Activated T-helper 1 cell treated with anti-CD3 and anti-CD28 coated beads, Interleukin-12 subunit alpha, Interleukin-12 subunit beta, Interleukin-2, Interleukin-4 antibody, amounts not matched to agents 30 ng/mL and 10 ng/mL and 1 ng/mL, durations not matched to agents 14 hours and 24 hours and 36 hours (primary cell): ENCODE measurements at regions of chr14 and their contacts with region 1.

Region 1: DNA sequence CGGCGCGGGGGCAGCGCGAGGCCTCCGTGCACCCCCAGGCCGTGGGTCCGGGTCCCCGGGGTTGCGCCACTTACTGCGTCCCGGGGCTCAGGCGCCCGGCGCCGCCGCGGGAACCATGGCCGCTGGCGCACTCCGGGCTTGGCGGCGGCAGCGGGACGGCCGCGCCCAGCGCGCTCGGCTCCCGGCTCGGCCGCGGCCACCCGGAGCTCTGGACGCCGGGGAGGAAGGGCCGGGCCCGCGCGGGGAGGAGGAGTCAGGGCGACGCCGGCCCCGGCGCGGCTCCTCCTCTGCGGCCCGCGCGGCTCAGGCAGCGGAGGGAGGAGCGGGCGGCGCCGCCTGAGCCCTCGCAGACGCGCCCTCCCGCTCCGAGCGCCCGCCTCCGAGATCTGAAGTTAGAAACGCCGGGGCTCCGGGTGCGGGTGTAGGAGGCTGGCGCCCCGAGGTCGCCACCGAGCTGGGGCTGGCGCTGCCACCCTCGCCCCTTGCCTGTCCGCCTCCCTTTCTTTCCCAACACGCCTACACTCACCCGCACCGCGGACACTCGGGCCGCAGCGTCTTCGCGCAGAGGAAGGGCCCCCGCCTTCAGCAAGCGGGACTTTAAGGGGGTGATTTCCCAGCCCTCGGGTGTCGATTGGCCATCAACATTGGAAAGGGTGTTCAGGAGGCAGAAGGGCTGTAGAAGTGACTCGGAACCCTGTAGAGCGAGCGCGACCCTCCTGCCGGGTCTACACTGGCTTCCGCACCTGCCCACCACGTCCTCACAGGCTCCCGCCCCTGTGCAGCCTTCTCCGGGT is at the start of gene NIN:
- DNase-seq: peak; percentile 73
- H3K4me3 Mint-ChIP-seq: peak within 1 kb of the TSS; percentile 93
- H3K27ac Mint-ChIP-seq: peak within 1 kb of the TSS; percentile 95
- H3K4me1 Mint-ChIP-seq: peaks cover 67% of the 10 kb centered on the region
- H3K27me3 Mint-ChIP-seq: peaks cover 16% of the 10 kb centered on the region
- total RNA-seq, gene NIN: 39.9 and 43.3 TPM in 2 replicates

Region 2: DNA sequence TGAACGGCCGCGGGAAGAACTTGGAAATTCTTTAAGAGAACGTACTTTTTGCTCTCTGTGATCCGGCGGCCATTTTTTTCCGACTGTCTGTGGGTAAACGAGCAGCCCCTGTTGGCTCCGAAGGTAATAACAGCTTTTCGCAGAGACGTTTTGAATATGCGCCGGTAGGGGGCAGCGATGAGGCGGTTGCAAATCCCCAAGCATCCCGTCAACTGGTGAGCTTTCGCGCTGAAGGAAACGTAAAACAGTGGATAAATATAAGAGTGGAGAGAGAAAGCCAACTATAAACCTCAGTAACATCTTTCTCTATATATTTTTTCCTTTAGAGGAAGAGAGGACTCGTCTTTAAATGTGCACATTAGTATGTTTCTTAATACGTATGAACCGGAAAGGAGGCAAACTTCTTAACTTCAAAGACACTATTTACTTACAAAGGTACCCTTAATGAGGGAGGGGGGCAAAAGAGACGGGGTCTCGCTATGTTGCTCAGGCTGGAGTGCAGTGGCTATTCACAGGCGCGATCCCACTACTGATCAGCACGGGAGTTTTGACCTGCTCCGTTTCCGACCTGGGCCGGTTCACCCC is 968.9 kb before region 1 on chr14:
- intact Hi-C with region 1: loop called (anchors 1 kb)
- DNase-seq: peak; percentile 81
- H3K4me3 Mint-ChIP-seq: no peak overlapping the region
- H3K27ac Mint-ChIP-seq: no peak overlapping the region
- H3K4me1 Mint-ChIP-seq: peaks cover 10% of the 10 kb centered on the region
- H3K27me3 Mint-ChIP-seq: peaks cover 6% of the 10 kb centered on the region

Region 3: GRCh38 chr14:50736932-50737419 is 94.2 kb before region 1 on chr14:
- intact Hi-C with region 1: loop called (anchors 2 kb)
- DNase-seq: peak; percentile 18
- H3K4me3 Mint-ChIP-seq: no peak overlapping the region
- H3K27ac Mint-ChIP-seq: peak overlapping the region; percentile 87
- H3K4me1 Mint-ChIP-seq: peaks cover 45% of the 10 kb centered on the region
- H3K27me3 Mint-ChIP-seq: no peaks in the 10 kb centered on the region

Region 4: DNA sequence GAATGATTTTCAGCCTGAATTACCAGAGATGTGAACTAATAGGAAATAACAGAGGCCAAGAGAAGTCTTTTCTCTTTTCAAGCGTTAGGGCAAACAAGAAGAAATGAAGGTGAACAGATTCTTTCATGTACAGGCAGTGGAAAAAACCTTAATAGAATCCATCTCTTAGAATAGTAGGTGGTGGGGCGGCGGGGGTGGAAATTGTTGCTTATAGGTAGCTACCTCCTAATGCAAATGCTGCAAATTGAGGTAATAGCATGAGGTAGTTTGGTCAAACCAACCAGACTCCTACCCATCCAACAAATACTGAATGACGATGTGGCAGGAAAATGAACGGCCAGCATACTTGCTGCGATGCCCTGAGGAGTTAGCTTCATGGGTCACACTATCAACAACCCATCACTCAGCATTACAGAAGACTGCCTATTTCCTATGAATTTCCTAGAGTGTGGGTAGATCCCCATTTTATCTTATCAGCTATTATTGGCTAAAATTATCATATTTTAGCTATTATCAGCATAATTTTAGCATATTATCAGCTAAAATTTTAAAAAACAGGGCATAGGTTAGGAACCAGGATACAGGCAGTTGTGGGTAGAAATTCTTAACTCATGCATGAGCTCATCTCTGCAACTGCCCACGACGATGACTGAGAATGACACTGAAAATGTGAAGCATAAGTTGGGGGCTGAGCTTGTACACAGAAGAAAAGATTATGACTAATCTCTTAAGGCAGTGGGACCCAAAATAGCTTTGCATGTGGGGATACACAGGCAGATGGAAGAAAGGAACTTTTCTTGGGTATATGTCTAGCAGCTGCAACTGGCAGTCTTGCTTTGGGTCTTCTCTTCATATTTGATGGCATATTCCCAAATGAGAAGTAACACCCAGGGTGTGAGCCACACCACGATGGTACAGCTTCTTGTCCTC is 68.9 kb before region 1 on chr14:
- intact Hi-C with region 1: loop called (anchors 2 kb)
- DNase-seq: no peak
- H3K4me3 Mint-ChIP-seq: peak overlapping the region; percentile 7
- H3K27ac Mint-ChIP-seq: peak overlapping the region; percentile 74
- H3K4me1 Mint-ChIP-seq: peaks cover 19% of the 10 kb centered on the region
- H3K27me3 Mint-ChIP-seq: no peaks in the 10 kb centered on the region

Region 5: DNA sequence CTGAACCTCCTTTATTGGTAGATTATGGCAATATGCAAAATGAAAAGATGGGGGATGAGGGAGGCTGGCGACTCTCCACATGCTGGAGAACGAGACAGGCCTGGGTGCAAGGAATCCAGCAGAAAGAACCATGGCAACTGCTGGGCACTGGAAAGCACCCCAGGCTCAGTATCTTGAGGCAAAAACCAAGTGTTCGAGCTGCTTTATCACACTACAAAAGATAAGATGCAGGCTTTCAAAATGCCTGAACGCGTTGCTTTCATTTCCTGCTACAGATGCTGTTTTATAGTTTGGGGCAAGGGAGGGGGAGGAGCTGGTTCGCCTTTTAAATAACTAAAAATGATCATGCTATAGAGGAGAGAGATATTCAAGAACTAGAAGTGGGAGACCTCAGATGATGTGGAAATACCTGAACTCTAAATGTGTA is 39.1 kb before region 1 on chr14:
- intact Hi-C with region 1: loop called (anchors 2 kb)
- DNase-seq: no peak
- H3K4me3 Mint-ChIP-seq: peak overlapping the region; percentile 40
- H3K27ac Mint-ChIP-seq: peak overlapping the region; percentile 63
- H3K4me1 Mint-ChIP-seq: peaks cover 68% of the 10 kb centered on the region
- H3K27me3 Mint-ChIP-seq: no peaks in the 10 kb centered on the region

Region 6: DNA sequence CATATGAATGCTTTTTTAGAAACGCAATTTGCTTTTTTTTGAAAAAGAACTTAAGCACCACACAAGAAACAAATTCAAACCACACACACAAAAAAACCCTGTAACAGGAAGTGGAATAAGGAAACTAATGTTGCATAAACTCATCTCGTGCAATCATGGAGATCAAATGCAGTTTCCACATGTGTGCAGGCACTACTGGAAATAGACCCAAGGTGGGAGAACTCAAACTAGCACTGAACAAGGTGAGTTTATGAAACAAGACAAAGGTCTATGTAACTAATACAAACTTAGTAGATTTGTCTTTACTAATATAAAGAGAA is 17.6 kb before region 1 on chr14:
- intact Hi-C with region 1: loop called (anchors 2 kb)
- DNase-seq: no peak
- H3K4me3 Mint-ChIP-seq: peak overlapping the region; percentile 35
- H3K27ac Mint-ChIP-seq: peak overlapping the region; percentile 72
- H3K4me1 Mint-ChIP-seq: peaks cover 33% of the 10 kb centered on the region
- H3K27me3 Mint-ChIP-seq: no peaks in the 10 kb centered on the region

Region 7: DNA sequence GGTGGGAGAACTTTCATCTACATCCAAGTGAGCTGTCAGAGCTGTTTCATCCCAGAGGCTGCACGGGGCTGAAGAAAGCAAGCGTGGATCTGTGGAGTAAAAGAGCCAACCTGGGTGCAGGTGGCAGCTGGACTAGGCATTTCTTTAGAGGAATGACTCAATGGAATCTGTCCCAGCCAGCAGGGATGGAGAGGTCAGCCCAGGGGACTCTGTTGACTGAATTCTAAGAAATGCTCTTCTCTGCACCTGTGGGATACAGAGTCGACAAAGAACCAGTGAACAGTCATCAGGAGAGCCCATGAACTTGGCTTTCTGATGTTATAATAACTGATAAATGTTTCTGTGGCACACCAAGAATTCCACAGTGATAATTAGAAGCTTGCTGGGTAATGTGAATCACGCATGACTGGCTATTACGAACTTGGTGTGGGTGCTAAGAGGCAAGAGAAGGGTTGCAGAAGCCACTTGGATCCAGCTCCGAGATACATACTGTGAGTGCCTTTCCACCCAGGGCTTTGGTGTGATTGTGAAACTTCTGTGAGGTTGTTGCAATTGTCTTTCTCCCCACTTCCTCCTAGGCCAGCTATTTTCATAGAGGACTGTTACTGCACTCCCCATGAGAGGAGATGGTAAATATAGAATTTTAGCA is 97.0 kb after region 1 on chr14:
- intact Hi-C with region 1: no loop called
- DNase-seq: no peak
- H3K4me3 Mint-ChIP-seq: no peak overlapping the region
- H3K27ac Mint-ChIP-seq: no peak overlapping the region
- H3K4me1 Mint-ChIP-seq: no peaks in the 10 kb centered on the region
- H3K27me3 Mint-ChIP-seq: peaks cover 3% of the 10 kb centered on the region

Region 8: GRCh38 chr14:51239813-51240803 is 409.0 kb after region 1 on chr14 and contains the start of gene TMX1:
- intact Hi-C with region 1: loop called (anchors 5 kb)
- DNase-seq: peak; percentile 87
- H3K4me3 Mint-ChIP-seq: no peak within 1 kb of the TSS
- H3K27ac Mint-ChIP-seq: no peak within 1 kb of the TSS
- H3K4me1 Mint-ChIP-seq: peaks cover 12% of the 10 kb centered on the region
- H3K27me3 Mint-ChIP-seq: no peaks in the 10 kb centered on the region
- total RNA-seq, gene TMX1: 51.1 and 51.3 TPM in 2 replicates